Panc1 (cell line): ENCODE measurements at regions of chr20 and their contacts with region 1.

Region 1: GRCh38 chr20:50690634-50691572 is at the start of gene RIPOR3:
- DNase-seq: no peak
- ATAC-seq: peak; percentile 51
- H3K4me3 ChIP-seq: peak within 1 kb of the TSS; percentile 64 to 71
- H3K27ac ChIP-seq: peak within 1 kb of the TSS; percentile 99
- H3K4me1 ChIP-seq: peaks cover 74% of the 10 kb centered on the region
- H3K27me3 ChIP-seq: no peaks in the 10 kb centered on the region
- CTCF ChIP-seq: no peak
- total RNA-seq, gene RIPOR3: 92.5 TPM

Region 2: GRCh38 chr20:49460916-49461315 is 1230.0 kb before region 1 on chr20:
- CTCF ChIA-PET with region 1: interaction called, 11 read pairs
- POLR2A ChIA-PET with region 1: no interaction called
- in situ Hi-C with region 1: no loop called
- intact Hi-C with region 1: no loop called
- DNase-seq: no peak
- ATAC-seq: no peak; the same call in 1 of the 2 replicates
- H3K4me3 ChIP-seq: no peak overlapping the region
- H3K27ac ChIP-seq: no peak overlapping the region
- H3K4me1 ChIP-seq: no peaks in the 10 kb centered on the region
- H3K27me3 ChIP-seq: no peaks in the 10 kb centered on the region
- CTCF ChIP-seq: no peak

Region 3: GRCh38 chr20:50635667-50636503 is 55.0 kb before region 1 on chr20:
- CTCF ChIA-PET with region 1: no interaction called
- POLR2A ChIA-PET with region 1: interaction called, 21 read pairs
- in situ Hi-C with region 1: no loop called
- intact Hi-C with region 1: no loop called
- DNase-seq: peak; percentile 59
- ATAC-seq: peak; percentile 60
- H3K4me3 ChIP-seq: peak overlapping the region; percentile 18 to 36
- H3K27ac ChIP-seq: peak overlapping the region; percentile 95
- H3K4me1 ChIP-seq: peaks cover 92% of the 10 kb centered on the region
- H3K27me3 ChIP-seq: no peaks in the 10 kb centered on the region
- CTCF ChIP-seq: peak; percentile 99

Region 4: GRCh38 chr20:50646483-50646996 is 44.4 kb before region 1 on chr20:
- CTCF ChIA-PET with region 1: no interaction called
- POLR2A ChIA-PET with region 1: no interaction called
- in situ Hi-C with region 1: no loop called
- intact Hi-C with region 1: no loop called
- DNase-seq: no peak
- ATAC-seq: no peak
- H3K4me3 ChIP-seq: no peak overlapping the region
- H3K27ac ChIP-seq: peak overlapping the region; percentile 95
- H3K4me1 ChIP-seq: peaks cover 60% of the 10 kb centered on the region
- H3K27me3 ChIP-seq: no peaks in the 10 kb centered on the region
- CTCF ChIP-seq: no peak

Region 5: DNA sequence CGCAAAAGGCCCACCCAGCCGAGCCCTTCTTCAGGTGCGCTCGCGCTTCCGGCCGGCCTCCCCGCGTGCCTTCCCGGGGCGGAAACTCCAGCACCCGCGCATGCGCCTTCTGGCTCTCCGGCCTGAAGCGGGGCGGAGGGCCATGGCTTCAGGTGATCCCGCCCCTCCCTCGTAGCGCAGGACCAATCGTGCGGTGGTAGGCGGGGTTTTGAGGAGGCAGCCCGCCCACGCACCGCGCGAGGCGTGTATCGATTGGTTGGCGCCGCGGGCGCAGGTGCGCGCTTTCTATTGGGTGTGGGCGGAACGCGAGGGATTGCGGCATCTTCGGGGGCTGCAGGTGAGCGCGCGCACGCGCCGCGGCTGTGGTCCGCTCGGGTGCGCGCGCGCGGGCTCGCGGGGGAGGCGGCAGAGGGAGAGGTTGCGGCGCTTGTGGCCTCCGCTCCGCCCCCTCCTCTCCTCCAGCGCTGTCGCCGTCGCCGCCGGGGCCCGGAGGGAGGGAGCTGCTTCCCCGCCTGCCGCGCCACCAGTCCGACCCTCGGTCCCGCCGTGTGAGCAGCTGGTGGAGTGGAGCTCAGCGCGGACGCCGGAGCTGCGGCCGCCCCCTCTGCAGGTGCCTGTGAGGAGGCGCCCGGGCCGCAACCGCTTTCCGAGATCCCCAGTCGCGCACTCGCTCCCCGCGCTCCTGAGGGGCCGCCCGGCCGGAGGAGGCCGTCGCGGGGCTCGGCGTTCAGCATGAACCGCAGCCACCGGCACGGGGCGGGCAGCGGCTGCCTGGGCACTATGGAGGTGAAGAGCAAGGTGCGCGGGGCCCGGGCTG is 40.4 kb after region 1 on chr20 and contains the start of gene PARD6B:
- CTCF ChIA-PET with region 1: interaction called, 3 read pairs
- POLR2A ChIA-PET with region 1: interaction called, 21 read pairs
- in situ Hi-C with region 1: loop called (anchors 5 kb)
- intact Hi-C with region 1: loop called (anchors 2 kb)
- DNase-seq: peak; percentile 95
- ATAC-seq: peak; percentile 83
- H3K4me3 ChIP-seq: peak within 1 kb of the TSS; percentile 71 to 89
- H3K27ac ChIP-seq: peak within 1 kb of the TSS; percentile 100
- H3K4me1 ChIP-seq: peaks cover 54% of the 10 kb centered on the region
- H3K27me3 ChIP-seq: no peaks in the 10 kb centered on the region
- CTCF ChIP-seq: no peak
- total RNA-seq, gene PARD6B: 132 TPM